ENCODE measurements at regions of chr21 and their contacts with region 1.

Region 1: DNA sequence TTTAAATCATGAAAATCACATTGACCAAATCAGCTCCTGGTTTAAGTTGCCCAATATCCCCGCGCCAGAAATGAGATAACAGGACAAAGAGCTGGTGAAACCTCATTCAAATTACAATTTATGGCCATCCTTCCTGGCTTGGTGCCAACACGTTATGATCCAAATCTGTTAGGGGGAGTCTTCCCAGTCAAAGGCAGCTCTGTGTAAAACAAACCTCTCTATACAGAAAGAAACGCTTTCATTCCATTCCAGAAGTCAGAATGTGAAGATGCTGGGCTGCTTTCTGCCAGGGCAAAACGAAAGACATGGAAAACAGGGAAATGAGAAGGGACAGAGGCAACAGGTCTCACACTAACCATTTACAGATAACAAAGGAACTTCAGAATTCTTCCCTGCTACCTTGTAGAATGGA is 53.5 kb upstream of the TIAM1 start:
- DNase-seq: peak in 2 of 10 donors; percentile 20 to 59

Region 2: DNA sequence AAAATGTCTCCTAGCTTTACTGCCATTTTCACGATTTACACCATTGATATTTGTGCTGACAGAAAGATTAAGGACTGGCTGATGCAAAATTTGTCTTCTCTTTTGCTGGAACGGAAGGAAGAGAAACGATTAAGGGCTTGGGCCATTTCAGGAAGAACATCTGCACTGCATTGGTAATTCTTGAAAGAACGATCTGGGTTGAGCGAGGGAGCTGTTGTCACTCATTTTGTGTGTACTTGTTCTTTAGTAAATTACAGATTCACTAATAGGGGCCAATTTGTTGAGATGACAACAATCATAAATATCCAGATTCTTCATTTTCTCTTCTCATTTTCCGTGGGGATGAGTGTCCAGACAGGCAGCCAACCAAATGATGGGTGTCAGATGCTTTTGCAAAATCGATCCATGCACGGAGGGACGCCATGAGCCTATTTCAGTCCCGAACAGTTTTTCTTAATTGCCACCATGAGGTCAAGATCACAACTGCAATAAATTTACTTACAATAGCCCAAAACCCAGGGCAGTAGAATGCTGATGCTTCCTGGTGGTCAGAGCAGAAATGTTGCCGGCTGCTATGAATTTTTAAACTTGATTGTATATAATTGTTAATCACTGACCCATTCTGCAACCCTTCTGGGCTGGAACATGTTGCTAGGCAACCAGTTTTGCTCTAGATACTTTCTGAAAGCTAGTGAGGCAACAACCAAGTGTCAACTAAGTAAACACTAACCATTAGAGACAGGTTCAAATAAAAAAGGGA is 78.9 kb after region 1 on chr21:
- intact Hi-C with region 1: loop called (anchors 10 kb)
- DNase-seq: peak in 1 of 10 donors; percentile 20

Region 3: DNA sequence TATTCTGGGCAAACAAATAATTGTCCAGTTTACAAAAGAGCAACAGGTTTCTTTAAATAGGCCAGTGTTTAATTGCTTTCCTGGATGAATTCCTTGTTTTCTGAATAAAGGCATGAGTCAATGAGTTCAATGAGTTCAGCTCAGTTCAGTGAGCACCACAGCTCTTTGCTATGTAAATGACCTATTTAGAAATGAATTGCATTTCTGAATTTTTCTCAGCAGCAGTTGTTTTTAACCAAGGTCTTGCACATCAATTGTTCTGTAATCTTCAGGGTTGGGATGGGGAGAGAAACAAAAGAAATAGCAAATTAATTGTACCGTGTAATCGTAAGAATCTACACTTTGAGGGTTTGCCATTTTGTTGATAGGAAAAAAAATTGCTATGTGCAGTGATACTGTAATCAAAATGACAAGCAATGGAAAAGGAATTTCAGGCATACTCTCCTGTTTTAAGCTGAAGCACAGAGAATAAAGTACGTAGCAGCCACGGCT is 835.6 kb after region 1 on chr21:
- intact Hi-C with region 1: no loop called
- DNase-seq: no peak

Measured in posterior cingulate gyrus (tissue), 11 donors.